Posterior vena cava (tissue), 2 donors: ENCODE measurements at regions of chr20 and their contacts with region 1.

Region 1: DNA sequence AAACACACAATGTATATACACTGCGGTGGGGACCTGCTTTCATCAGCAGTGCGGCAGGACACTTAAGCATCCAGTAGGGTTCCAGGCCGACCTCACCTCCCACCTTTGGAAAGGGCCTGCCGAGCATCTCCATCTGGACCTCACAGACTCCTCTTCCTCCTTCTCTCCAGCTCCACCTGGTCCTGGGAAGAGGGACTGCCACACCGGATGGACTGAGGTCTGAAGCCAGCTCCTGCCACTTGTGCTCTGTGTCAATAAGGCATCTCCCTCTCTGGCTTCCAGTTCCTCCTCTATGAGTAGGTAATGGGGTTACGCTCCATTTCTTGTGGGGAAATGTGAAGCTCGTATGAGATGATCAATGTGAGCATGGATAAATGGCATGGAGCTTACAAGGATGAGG is 19.1 kb upstream of the NNAT start:
- DNase-seq: peak; percentile 48

Region 2: DNA sequence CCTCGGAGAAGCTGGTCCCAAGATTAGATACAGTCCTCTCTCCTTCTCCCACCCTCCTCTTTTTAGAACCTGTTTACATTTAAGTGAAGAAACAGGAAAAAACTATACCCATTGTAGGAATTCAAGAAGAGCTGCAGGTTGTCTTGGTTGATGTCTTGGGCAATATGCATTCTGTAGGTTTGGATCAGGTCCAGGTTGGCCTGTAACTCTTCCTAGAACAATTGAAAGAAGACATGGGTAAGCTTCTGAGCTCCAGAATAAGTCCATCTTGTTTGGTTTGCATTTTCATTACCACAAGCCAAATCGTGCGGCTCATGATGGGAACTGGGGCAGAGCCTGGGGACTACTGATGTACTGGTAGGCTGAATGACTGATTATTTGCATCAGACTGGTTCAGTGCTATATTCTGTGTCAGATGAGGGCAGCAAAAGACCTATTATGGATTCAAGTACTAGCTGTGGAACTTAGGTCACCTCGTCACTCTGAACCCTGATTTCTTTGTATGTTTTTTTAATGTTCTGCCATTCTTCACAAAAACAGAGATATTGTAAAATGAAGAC is 835.7 kb before region 1 on chr20:
- intact Hi-C with region 1: no loop called
- DNase-seq: no peak

Region 3: DNA sequence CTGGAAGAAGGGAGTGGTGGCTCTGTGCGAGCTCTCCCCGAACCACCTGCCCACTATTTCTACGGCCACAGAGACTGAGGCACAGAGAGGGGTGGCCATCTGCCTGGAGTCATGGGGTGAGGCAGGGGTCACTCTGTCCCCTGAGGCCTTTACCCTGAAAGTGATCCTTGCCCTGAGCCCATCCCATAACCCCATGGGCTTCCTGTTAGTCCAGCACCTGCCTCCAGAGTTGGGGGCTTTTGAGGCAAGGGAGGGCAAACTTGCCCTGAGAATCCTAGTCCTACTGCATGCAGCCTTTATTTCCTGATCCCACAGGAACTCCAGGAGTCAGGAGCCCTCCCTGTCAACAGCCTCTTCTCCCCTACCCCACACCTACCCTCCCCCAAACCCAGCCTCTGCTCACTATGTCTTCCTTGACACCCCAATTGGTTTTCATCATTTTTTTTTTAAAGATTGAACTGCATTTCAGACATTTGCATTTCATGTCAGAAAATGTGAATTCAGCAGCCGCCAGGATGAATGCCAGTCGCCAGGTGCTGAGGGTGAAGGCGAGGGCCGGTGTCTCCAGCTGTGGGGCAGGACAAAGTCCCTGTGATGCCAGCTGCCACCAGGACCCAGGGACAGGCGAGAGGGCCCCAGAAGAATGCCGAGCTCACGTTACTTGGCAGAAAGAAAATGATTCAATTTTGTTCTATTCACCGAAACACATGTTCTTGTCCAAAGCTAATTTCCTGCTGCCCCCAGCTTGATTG is 28.5 kb before region 1 on chr20:
- intact Hi-C with region 1: loop called in 1 of 2 experiments (anchors 1 kb)
- DNase-seq: no peak